ENCODE measurements at regions of chr13 and their contacts with region 1.

Region 1: DNA sequence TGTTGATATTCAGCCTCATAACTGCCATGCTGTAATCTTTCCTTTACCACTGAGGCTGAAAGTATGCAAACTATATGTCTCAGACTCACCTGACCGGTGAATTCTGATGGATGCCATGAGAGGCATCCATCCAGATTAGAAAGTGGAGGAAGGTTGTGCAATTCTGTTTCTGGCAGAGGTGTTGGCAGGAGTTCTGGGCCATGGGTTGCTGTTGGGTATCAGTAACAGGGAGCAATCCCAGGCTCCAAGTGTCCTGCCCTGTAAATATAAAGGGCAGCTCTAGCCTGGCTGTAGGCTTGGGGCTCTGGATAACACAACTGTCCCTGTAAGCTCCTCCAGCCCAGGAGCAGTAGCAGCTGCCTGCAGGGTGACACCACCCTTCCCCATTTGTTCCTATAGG is 77.4 kb upstream of the ABCC4 start:
- DNase-seq: no peak
- ATAC-seq: no peak
- H3K4me3 ChIP-seq: no peak overlapping the region
- H3K27ac ChIP-seq: no peak overlapping the region
- H3K4me1 ChIP-seq: peaks cover 16% of the 10 kb centered on the region
- H3K27me3 ChIP-seq: no peaks in the 10 kb centered on the region
- CTCF ChIP-seq: no peak
- EP300 ChIP-seq: no peak
- POLR2A ChIP-seq: no peak
- RAD21 ChIP-seq: no peak

Region 2: GRCh38 chr13:94974015-94974951 is 404.3 kb before region 1 on chr13:
- CTCF ChIA-PET with region 1: no interaction called
- POLR2A ChIA-PET with region 1: no interaction called
- RAD21 ChIA-PET with region 1: no interaction called
- SMC1A ChIA-PET with region 1: no interaction called
- in situ Hi-C with region 1: no loop called
- intact Hi-C with region 1: no loop called
- DNase-seq: no peak
- ATAC-seq: no peak
- H3K4me3 ChIP-seq: no peak overlapping the region
- H3K27ac ChIP-seq: no peak overlapping the region
- H3K4me1 ChIP-seq: no peaks in the 10 kb centered on the region
- H3K27me3 ChIP-seq: no peaks in the 10 kb centered on the region; a peak in 3 of 4 replicates
- CTCF ChIP-seq: no peak
- EP300 ChIP-seq: no peak
- POLR2A ChIP-seq: no peak
- RAD21 ChIP-seq: no peak

Region 3: DNA sequence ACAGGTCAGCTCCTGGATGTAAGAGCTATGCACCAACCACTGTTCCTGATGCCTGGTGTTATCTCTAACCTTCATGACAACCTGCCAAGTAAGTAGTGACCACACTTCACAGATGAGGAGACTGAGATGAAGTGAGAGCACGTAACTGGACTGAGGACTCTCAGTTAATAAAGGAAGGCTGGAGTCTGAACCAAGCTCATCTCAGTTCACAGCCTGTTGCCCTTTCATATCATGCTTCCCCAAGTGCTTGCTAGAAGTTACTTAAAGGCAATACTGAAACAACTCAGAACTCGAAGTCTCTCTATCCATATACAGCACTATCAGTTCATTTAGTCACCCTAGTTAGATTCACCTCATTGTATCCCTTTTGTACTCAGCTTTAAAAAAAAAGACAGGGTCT is 197.0 kb before region 1 on chr13:
- CTCF ChIA-PET with region 1: interaction called, 340 read pairs
- POLR2A ChIA-PET with region 1: no interaction called
- RAD21 ChIA-PET with region 1: interaction called, 9 read pairs
- SMC1A ChIA-PET with region 1: interaction called, 7 read pairs
- in situ Hi-C with region 1: no loop called
- intact Hi-C with region 1: no loop called
- DNase-seq: peak; percentile 40
- ATAC-seq: peak; percentile 85
- H3K4me3 ChIP-seq: no peak overlapping the region
- H3K27ac ChIP-seq: peak overlapping the region; percentile 57
- H3K4me1 ChIP-seq: peaks cover 30% of the 10 kb centered on the region
- H3K27me3 ChIP-seq: no peaks in the 10 kb centered on the region
- CTCF ChIP-seq: no peak
- EP300 ChIP-seq: no peak
- POLR2A ChIP-seq: no peak
- RAD21 ChIP-seq: no peak

Region 4: GRCh38 chr13:95289020-95289444 is 89.6 kb before region 1 on chr13:
- CTCF ChIA-PET with region 1: interaction called, 9 read pairs
- POLR2A ChIA-PET with region 1: no interaction called
- RAD21 ChIA-PET with region 1: interaction called, 5 read pairs
- SMC1A ChIA-PET with region 1: interaction called, 6 read pairs
- in situ Hi-C with region 1: no loop called
- intact Hi-C with region 1: loop called (anchors 5 kb)
- DNase-seq: no peak
- ATAC-seq: no peak
- H3K4me3 ChIP-seq: no peak overlapping the region
- H3K27ac ChIP-seq: no peak overlapping the region
- H3K4me1 ChIP-seq: peaks cover 17% of the 10 kb centered on the region
- H3K27me3 ChIP-seq: no peaks in the 10 kb centered on the region
- CTCF ChIP-seq: no peak
- EP300 ChIP-seq: no peak
- POLR2A ChIP-seq: no peak
- RAD21 ChIP-seq: no peak

Region 5: DNA sequence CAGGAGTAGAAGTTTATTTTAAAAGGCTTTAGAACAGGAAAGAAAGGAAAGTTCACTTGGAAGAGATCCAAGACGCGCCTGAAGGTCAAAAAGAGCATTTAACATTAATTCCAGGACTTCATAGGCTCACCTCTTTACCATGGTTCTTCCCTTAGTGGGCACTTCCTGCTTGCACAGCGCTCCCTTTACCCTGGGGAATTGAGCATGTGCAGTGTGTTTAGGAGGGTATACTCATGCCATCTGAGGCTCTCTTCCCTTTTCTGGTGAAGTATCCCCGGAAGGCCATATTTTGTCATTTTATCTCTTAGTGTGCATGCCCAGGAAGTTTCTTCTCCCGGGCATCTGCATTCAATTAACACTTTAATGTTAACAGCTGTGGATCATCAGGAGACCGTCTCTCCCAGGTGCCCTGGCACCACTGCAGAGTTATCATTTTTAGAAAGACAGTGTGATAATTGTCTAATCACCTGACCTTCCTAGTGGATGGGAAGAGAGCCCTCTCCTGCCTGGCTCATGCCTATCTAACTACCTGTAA is 11.2 kb before region 1 on chr13:
- CTCF ChIA-PET with region 1: interaction called, 11 read pairs
- POLR2A ChIA-PET with region 1: no interaction called
- RAD21 ChIA-PET with region 1: interaction called, 4 read pairs
- SMC1A ChIA-PET with region 1: interaction called, 6 read pairs
- in situ Hi-C with region 1: no loop called
- intact Hi-C with region 1: no loop called
- DNase-seq: no peak
- ATAC-seq: no peak
- H3K4me3 ChIP-seq: no peak overlapping the region
- H3K27ac ChIP-seq: no peak overlapping the region
- H3K4me1 ChIP-seq: no peaks in the 10 kb centered on the region; the same call in 1 of the 2 replicates
- H3K27me3 ChIP-seq: no peaks in the 10 kb centered on the region
- CTCF ChIP-seq: no peak
- EP300 ChIP-seq: no peak
- POLR2A ChIP-seq: no peak
- RAD21 ChIP-seq: no peak

Region 6: DNA sequence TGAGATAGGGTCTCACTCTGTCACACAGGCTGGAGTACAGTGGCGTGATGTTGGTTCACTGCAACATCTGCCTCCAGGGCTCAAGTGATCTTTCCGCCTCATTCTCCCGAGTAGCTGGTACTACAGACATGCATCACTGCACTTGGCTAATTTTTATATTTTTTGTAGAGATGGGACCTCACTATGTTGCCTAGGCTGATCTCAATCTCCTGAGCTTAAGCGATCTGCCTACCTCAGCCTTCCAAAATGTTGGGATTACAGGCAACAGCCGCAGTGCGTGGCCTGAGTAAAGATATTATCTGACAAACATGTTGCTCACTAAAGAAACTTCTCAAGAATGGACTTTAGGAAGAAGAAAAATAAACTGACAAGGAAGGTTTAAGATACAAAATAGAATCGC is 48.0 kb after region 1 on chr13:
- CTCF ChIA-PET with region 1: no interaction called
- POLR2A ChIA-PET with region 1: no interaction called
- RAD21 ChIA-PET with region 1: no interaction called
- SMC1A ChIA-PET with region 1: no interaction called
- in situ Hi-C with region 1: no loop called
- intact Hi-C with region 1: no loop called
- DNase-seq: no peak
- ATAC-seq: no peak
- H3K4me3 ChIP-seq: no peak overlapping the region
- H3K27ac ChIP-seq: no peak overlapping the region
- H3K4me1 ChIP-seq: no peaks in the 10 kb centered on the region
- H3K27me3 ChIP-seq: no peaks in the 10 kb centered on the region
- CTCF ChIP-seq: no peak
- EP300 ChIP-seq: no peak
- POLR2A ChIP-seq: no peak
- RAD21 ChIP-seq: no peak